Right cardiac atrium (tissue), 5 donors: ENCODE measurements at regions of chr10 and their contacts with region 1.

Region 1: GRCh38 chr10:114767101-114767985 is 54.2 kb upstream of the FHIP2A start:
- DNase-seq: peak; percentile 30 to 80 (median 69)
- ATAC-seq: peak; percentile 69 to 74
- H3K4me3 ChIP-seq: peak overlapping the region; percentile 87
- H3K27ac ChIP-seq: peak overlapping the region; percentile 72
- H3K4me1 ChIP-seq: no peaks in the 10 kb centered on the region
- H3K27me3 ChIP-seq: no peaks in the 10 kb centered on the region

Region 2: DNA sequence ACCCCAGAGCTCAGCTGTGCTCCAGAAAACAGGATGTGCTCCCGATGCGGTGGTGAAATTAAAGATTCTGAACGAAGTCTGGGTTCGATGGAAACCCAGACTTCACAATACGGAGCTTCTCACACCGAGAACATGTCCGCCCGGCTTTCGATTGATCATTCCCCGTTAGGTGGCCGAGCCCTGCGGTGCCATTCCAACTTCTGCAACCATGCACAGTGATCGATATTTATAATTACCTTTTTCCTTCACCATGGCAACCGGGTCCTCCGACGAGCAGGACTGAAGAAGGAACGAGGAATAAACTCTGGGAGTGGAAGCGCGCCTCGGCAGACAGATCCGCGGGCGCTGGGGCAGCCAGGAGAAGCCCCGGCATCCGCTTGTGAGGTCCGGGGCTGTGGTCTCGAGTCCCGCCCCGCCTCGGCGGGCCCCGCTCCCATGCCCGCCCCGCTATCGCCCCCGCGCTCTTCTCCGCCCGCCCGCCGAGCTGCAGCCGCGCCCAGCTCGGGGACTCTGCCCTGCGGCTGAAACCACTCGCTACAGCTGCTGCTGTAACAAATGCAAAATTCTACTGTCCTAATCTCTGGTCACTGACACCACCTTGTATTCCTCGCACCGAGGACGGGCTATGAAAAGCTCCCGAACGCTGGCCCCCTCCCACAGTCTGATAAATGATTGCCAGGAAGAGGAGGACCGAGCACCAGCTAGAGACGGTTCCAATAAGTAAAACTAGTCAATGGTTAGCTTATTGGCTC is 135.5 kb before region 1 on chr10:
- intact Hi-C with region 1: loop called in 1 of 4 experiments (anchors 10 kb)
- DNase-seq: peak; percentile 59 to 84 (median 80)
- ATAC-seq: peak; percentile 64 to 67
- H3K4me3 ChIP-seq: peak overlapping the region; percentile 97
- H3K27ac ChIP-seq: peak overlapping the region; percentile 87
- H3K4me1 ChIP-seq: peaks cover 14% of the 10 kb centered on the region
- H3K27me3 ChIP-seq: no peaks in the 10 kb centered on the region

Region 3: GRCh38 chr10:115402690-115403089 is 635.3 kb after region 1 on chr10:
- intact Hi-C with region 1: no loop called
- DNase-seq: no peak
- ATAC-seq: no peak
- H3K4me3 ChIP-seq: no peak overlapping the region
- H3K27ac ChIP-seq: no peak overlapping the region
- H3K4me1 ChIP-seq: no peaks in the 10 kb centered on the region
- H3K27me3 ChIP-seq: no peaks in the 10 kb centered on the region